Motor neuron (in vitro differentiated cells): ENCODE measurements at regions of chr11 and their contacts with region 1.

Region 1: DNA sequence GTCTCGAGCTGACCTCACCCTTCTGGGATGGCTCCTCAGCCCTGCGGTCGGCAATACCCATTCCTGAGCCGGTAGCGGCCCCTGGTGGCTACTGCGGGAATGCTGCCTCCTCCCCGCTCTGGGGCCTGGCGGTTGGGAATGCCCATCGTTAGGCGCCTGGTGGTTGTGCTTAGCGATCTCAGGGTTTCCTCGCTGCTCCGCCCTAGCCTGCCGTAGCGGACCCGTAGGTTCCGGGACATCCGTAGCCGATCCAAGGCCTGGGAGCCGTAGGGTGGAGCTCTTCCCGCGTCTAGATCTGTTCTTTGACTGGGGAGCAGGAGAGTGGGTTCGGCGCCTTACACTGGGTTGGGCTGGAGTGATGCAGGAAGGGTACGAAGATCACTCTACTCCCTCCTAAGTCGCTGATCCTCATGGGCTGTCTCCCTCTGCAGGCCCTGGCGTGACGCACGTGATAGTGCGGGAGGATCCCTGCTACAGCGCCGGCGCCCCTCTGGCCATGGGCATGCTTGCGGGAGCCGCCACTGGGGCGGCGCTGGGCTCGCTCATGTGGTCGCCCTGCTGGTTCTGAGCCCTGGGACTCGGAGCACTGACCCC is 14.8 kb downstream of the PLEKHB1 start:
- ATAC-seq: peak; percentile 90 to 99 (median 97)
- H3K4me3 ChIP-seq: peak overlapping the region in 3 of 5 donors; percentile 1 to 27 (median 15)
- H3K27ac ChIP-seq: no peak overlapping the region
- H3K4me1 ChIP-seq: peaks cover 4 to 10% of the 10 kb centered on the region in 2 donors

Region 2: GRCh38 chr11:73376160-73376802 is 284.9 kb before region 1 on chr11 and contains the start of gene RELT:
- in situ Hi-C with region 1: loop called in 1 of 9 experiments (anchors 25 kb)
- ATAC-seq: peak; percentile 84 to 94 (median 86)
- H3K4me3 ChIP-seq: peak within 1 kb of the TSS; percentile 49 to 77 (median 51)
- H3K27ac ChIP-seq: peak within 1 kb of the TSS; percentile 28 to 64
- H3K4me1 ChIP-seq: peaks cover 7 to 13% of the 10 kb centered on the region in 2 donors
- total RNA-seq, gene RELT: 6.0 to 11.8 (median 7.0) TPM

Region 3: GRCh38 chr11:73404048-73404447 is 257.1 kb before region 1 on chr11:
- in situ Hi-C with region 1: loop called in 2 of 9 experiments (anchors 5 to 25 kb)
- ATAC-seq: peak; percentile 35 to 83 (median 64)
- H3K4me3 ChIP-seq: no peak overlapping the region
- H3K27ac ChIP-seq: no peak overlapping the region
- H3K4me1 ChIP-seq: peaks cover 0 to 5% of the 10 kb centered on the region in 2 donors

Region 4: DNA sequence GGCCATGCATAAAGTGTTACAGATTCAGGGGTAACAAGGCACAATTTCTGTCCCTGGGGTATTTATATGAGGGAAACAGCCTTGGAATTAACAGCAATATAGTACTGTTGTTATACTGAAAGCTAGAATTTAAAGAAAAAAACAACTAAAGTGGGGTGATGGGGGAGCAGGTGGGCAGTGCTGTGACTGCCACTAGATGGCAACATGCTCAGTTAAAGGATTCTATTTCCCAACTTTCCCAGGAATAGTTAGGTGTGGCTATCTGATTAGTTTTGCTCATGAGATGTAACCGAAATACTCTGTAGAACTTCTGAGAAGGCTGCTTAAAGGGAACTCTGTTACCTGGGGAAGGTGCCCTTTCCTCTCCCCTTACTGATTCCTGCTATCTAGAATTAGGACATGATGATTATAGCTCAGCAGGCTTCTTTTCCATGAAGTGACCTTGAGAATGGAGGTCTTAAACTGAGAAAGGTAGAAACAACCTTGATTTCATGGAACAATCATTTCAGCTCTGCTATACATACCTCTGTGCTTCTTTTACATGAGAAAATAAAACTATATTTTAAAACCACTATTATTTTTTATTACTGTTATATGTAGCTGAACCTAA is 182.3 kb before region 1 on chr11:
- in situ Hi-C with region 1: loop called in 1 of 9 experiments (anchors 25 kb)
- ATAC-seq: peak in 4 of 8 experiments; percentile 57 to 94 (median 92)
- H3K4me3 ChIP-seq: no peak overlapping the region
- H3K27ac ChIP-seq: no peak overlapping the region
- H3K4me1 ChIP-seq: no peaks in the 10 kb centered on the region